Dendritic cell treated with granulocyte-macrophage colony-stimulating factor and Interleukin-4, amounts not matched to agents 40 ng/mL and 50 ng/mL, for 4 days (primary cell): ENCODE measurements at regions of chr3 and their contacts with region 1.

Region 1: DNA sequence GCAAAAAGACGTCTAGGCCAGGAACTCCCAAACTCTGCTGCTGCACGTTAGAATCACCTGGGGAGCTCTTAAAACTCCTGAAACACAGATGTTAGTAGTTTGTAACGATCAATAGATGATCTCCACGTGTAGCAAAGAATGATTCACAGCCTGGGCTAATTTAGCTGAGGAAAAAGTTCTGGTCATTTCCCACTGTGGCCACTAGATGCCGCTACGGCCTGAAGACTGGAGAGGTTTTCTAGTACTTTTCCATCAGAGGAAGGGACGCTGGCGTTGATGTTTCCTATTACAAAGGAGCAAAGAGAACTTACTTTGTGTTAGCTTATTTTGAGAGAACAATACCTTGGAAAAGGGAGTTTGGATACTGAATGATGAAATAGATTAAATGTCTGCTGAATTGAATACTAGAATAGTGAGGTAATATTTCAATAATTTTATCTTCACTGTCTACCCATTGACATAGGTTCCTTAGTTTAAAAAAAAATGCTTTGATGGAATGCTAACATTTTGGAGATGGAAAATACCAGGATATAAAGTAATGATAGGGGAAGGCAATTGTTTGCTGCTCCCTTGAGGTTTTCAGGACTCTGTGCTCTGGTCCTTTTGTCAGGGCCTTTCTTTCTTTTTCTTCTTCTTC is 159.1 kb downstream of the P3H2 start:
- H3K4me3 Mint-ChIP-seq: no peak overlapping the region
- H3K27ac Mint-ChIP-seq: no peak overlapping the region
- H3K4me1 Mint-ChIP-seq: no peaks in the 10 kb centered on the region
- H3K27me3 Mint-ChIP-seq: peaks cover 10% of the 10 kb centered on the region

Region 2: DNA sequence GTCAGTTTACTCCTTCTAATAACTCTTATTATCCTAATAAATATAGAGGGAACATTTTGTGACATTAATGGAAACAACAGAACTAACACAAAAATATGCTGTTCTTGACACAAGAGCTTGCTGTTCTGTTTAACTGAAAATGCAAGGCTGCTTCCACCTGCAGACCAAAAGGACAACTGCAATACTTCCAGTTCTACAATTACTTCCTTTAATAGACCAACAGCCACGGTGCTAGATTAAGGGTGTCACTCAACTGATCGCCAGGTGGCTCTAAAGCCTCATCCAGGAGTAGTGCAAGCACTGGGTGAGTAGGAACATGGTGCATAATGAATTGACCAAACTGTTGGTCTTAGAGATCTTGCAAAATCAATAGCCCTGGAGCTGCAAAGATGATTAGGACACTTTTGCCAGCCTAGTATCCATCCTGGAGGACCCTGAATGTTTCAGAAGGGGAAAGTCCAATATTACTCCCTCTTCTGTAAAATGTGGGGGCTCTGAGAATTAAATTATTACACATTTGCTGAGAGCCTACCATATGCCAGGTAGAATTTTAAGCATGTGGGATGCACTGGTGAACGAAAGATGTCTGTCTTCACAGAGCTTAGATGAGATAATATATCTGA is 422.7 kb after region 1 on chr3:
- intact Hi-C with region 1: loop called (anchors 10 kb)
- H3K4me3 Mint-ChIP-seq: no peak overlapping the region
- H3K27ac Mint-ChIP-seq: no peak overlapping the region
- H3K4me1 Mint-ChIP-seq: no peaks in the 10 kb centered on the region
- H3K27me3 Mint-ChIP-seq: no peaks in the 10 kb centered on the region